HEK293 (cell line): ENCODE measurements at regions of chr1 and their contacts with region 1.

Region 1: GRCh38 chr1:170692866-170693575 is 29.1 kb downstream of the PRRX1 start:
- H3K4me3 ChIP-seq: no peak overlapping the region
- H3K27ac ChIP-seq: no peak overlapping the region
- H3K4me1 ChIP-seq: peaks cover 3% of the 10 kb centered on the region; the same call in 1 of the 2 replicates
- CTCF ChIP-seq: no peak

Region 2: GRCh38 chr1:170414989-170415709 is 277.9 kb before region 1 on chr1:
- CTCF ChIA-PET with region 1: no interaction called
- POLR2A ChIA-PET with region 1: no interaction called
- H3K4me3 ChIP-seq: no peak overlapping the region
- H3K27ac ChIP-seq: no peak overlapping the region
- H3K4me1 ChIP-seq: no peaks in the 10 kb centered on the region
- CTCF ChIP-seq: no peak

Region 3: GRCh38 chr1:170670802-170671628 is 22.0 kb before region 1 on chr1:
- CTCF ChIA-PET with region 1: interaction called, 14 read pairs
- POLR2A ChIA-PET with region 1: no interaction called
- H3K4me3 ChIP-seq: no peak overlapping the region
- H3K27ac ChIP-seq: no peak overlapping the region
- H3K4me1 ChIP-seq: no peaks in the 10 kb centered on the region
- CTCF ChIP-seq: no peak

Region 4: DNA sequence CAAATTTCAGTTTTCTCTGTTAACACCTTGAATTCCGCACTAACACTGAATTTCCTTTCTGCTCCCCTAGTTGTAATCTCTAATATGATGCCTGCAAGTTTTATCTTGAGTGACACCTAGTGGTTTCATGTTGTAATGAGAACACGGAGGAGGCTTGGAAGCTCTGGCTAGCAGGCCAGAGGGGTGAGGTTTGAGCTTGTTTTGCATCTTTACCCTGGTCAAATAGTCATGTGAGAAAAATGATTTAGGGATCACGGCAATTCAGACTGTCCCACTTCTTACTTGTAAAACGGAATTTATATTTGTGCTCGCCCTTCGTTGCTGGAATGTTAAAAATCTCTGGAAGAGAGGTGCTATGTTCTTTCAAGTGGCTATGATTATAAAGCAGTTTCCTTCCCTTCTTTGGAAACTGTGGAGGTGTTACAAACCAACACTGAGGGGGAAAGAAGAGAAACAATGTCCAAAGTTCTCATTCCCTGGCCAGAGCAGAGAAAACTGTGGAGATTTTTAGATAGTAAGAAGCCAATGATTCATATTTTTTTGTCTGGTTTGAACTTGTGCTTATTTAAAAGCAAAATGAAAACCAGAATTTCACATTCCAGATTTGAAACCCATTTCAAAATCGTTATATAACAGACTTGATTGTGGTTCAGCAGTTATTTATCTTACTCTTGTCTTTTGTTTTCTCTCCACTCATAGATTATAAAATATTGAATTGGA is 237.0 kb after region 1 on chr1:
- CTCF ChIA-PET with region 1: interaction called, 10 read pairs
- POLR2A ChIA-PET with region 1: no interaction called
- H3K4me3 ChIP-seq: no peak overlapping the region
- H3K27ac ChIP-seq: no peak overlapping the region
- H3K4me1 ChIP-seq: no peaks in the 10 kb centered on the region
- CTCF ChIP-seq: peak; percentile 44; the same call in 1 of the 2 replicates